ENCODE measurements at regions of chr12 and their contacts with region 1.

Region 1: GRCh38 chr12:84502907-84503787 is 409.5 kb downstream of the SLC6A15 start:
- DNase-seq: peak; percentile 41 to 74 (median 62)
- H3K4me3 ChIP-seq: no peak overlapping the region
- H3K27ac ChIP-seq: no peak overlapping the region
- H3K4me1 ChIP-seq: peaks cover 0 to 2% of the 10 kb centered on the region in 2 donors
- H3K27me3 ChIP-seq: no peaks in the 10 kb centered on the region
- CTCF ChIP-seq: peak; percentile 54 to 63 (median 58)
- POLR2A ChIP-seq: no peak

Region 2: DNA sequence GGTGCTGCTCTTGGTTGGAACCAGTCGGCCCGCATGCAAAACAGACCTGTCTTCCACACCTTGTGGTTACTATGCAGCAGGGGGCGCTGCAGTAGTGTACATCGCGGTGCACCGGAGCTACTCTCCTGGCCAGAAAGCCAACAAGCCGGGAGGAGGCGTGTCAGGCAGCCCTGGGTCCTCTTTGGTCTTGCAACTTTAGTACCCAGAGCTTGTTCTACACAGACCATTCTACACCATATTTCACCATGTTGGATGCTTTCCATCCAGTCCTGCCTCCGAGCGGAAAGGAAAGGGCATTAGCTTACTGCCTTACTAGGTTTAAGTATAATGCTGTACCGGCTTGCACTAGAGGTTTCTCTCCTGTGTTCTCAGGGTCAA is 1817.4 kb before region 1 on chr12:
- intact Hi-C with region 1: loop called in 1 of 2 experiments (anchors 10 kb)
- DNase-seq: peak; percentile 93 to 98 (median 97)
- H3K4me3 ChIP-seq: peak overlapping the region; percentile 31 to 98 (median 74)
- H3K27ac ChIP-seq: peak overlapping the region; percentile 78 to 96 (median 93)
- H3K4me1 ChIP-seq: peaks cover 0 to 10% of the 10 kb centered on the region in 2 donors
- H3K27me3 ChIP-seq: no peaks in the 10 kb centered on the region
- CTCF ChIP-seq: peak; percentile 77 to 93 (median 88)
- POLR2A ChIP-seq: peak in 1 of 2 donors; percentile 7